ENCODE measurements at regions of chr7 and their contacts with region 1.

Region 1: GRCh38 chr7:24665564-24666294 is 91.5 kb downstream of the GSDME start:
- DNase-seq: peak; percentile 66
- H3K4me3 ChIP-seq: no peak overlapping the region
- H3K27ac ChIP-seq: no peak overlapping the region
- H3K4me1 ChIP-seq: peaks cover 25% of the 10 kb centered on the region
- H3K27me3 ChIP-seq: no peaks in the 10 kb centered on the region
- CTCF ChIP-seq: peak; percentile 48 to 56
- POLR2A ChIP-seq: no peak

Region 2: DNA sequence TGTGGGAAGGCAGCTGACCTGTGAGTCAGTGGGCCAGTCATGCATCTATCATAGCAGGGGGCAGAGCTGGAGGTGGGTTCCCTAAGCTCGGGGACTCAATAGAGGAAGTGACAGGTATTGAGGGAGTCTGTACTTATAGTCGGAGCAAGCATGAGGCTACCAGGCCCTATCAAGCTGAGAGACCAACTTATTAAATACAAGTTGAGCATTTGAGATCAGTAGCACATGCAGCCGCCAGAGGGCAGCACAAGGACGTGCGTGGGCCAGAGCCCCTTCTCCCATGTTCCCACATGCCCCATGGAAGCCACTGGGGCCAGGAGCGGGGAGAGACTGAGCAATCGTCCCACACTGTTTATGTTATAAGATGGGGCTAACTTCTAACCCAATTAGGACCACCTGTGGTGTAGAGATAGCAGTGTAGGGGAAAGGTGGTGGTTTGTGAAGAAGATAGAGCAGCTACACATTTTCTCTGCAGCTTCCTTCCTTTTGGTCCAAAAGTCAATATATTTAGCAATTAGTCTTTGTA is 968.8 kb before region 1 on chr7:
- CTCF ChIA-PET with region 1: no interaction called
- POLR2A ChIA-PET with region 1: no interaction called
- dilution Hi-C with region 1: no loop called
- intact Hi-C with region 1: loop called (anchors 5 kb)
- DNase-seq: peak; percentile 47
- H3K4me3 ChIP-seq: no peak overlapping the region
- H3K27ac ChIP-seq: no peak overlapping the region
- H3K4me1 ChIP-seq: no peaks in the 10 kb centered on the region
- H3K27me3 ChIP-seq: no peaks in the 10 kb centered on the region
- CTCF ChIP-seq: peak; percentile 74 to 77
- POLR2A ChIP-seq: no peak

Region 3: GRCh38 chr7:23863209-23863798 is 802.4 kb before region 1 on chr7:
- CTCF ChIA-PET with region 1: interaction called, 3 read pairs
- POLR2A ChIA-PET with region 1: no interaction called
- dilution Hi-C with region 1: no loop called
- intact Hi-C with region 1: loop called (anchors 2 kb)
- DNase-seq: peak; percentile 15
- H3K4me3 ChIP-seq: no peak overlapping the region
- H3K27ac ChIP-seq: no peak overlapping the region
- H3K4me1 ChIP-seq: no peaks in the 10 kb centered on the region
- H3K27me3 ChIP-seq: no peaks in the 10 kb centered on the region
- CTCF ChIP-seq: peak; percentile 11 to 29
- POLR2A ChIP-seq: no peak

Region 4: GRCh38 chr7:24290004-24290641 is 375.6 kb before region 1 on chr7:
- CTCF ChIA-PET with region 1: interaction called, 4 read pairs
- POLR2A ChIA-PET with region 1: no interaction called
- dilution Hi-C with region 1: no loop called
- intact Hi-C with region 1: loop called (anchors 2 kb)
- DNase-seq: peak; percentile 20
- H3K4me3 ChIP-seq: no peak overlapping the region
- H3K27ac ChIP-seq: no peak overlapping the region
- H3K4me1 ChIP-seq: no peaks in the 10 kb centered on the region
- H3K27me3 ChIP-seq: peaks cover 11 to 15% of the 10 kb centered on the region in 2 experiments
- CTCF ChIP-seq: peak in 1 of 2 donors; percentile 28
- POLR2A ChIP-seq: no peak

Region 5: DNA sequence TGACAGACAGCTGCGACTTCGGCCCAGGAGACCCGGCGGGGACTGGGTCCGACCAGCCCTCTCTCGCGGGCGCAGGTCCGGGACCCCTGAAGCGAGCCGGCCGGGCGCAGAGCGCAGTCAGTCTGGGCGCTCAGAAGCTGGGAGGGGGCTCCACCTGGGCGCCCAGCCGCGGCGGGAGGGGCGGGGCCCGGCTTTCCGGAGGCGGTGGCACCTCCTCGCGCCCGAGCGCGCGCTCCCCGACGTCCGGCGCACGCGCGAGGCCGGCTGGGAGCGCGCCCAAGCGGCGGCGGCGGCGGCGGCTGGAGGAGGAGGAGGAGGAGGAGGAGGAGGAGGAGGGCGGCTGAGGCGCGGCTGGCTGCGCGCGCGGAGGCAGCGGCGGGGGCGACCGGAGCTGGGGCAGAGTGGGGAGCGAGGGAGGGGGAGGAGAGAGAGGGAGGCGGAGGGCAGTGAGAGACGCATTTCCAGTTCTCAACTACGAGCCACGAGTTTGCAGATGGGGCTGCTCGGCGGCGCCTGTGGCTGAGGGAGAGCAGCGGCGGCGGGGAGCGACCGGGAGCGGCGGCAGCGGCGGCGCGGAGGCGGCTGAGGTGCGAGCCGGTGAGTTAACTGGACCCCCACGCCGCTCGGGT is 92.6 kb before region 1 on chr7 and contains the start of gene PALS2:
- CTCF ChIA-PET with region 1: interaction called, 134 read pairs
- POLR2A ChIA-PET with region 1: interaction called, 3 read pairs
- dilution Hi-C with region 1: no loop called
- intact Hi-C with region 1: loop called (anchors 1 kb)
- DNase-seq: peak; percentile 74
- H3K4me3 ChIP-seq: peak within 1 kb of the TSS; percentile 73 to 92 (median 82)
- H3K27ac ChIP-seq: peak within 1 kb of the TSS; percentile 61
- H3K4me1 ChIP-seq: peaks cover 17% of the 10 kb centered on the region
- H3K27me3 ChIP-seq: peaks cover 25 to 30% of the 10 kb centered on the region in 2 experiments
- CTCF ChIP-seq: no peak
- POLR2A ChIP-seq: no peak
- total RNA-seq, gene PALS2: 23.6 and 24.4 TPM in 2 replicates

Region 6: GRCh38 chr7:24825931-24826661 is 160.4 kb after region 1 on chr7:
- CTCF ChIA-PET with region 1: no interaction called
- POLR2A ChIA-PET with region 1: no interaction called
- dilution Hi-C with region 1: no loop called
- intact Hi-C with region 1: no loop called
- DNase-seq: peak; percentile 12
- H3K4me3 ChIP-seq: no peak overlapping the region
- H3K27ac ChIP-seq: no peak overlapping the region
- H3K4me1 ChIP-seq: peaks cover 24% of the 10 kb centered on the region
- H3K27me3 ChIP-seq: no peaks in the 10 kb centered on the region
- CTCF ChIP-seq: no peak
- POLR2A ChIP-seq: no peak

Measured in endothelial cell of umbilical vein (primary cell).